ENCODE measurements at regions of chr19 and their contacts with region 1.

Region 1: DNA sequence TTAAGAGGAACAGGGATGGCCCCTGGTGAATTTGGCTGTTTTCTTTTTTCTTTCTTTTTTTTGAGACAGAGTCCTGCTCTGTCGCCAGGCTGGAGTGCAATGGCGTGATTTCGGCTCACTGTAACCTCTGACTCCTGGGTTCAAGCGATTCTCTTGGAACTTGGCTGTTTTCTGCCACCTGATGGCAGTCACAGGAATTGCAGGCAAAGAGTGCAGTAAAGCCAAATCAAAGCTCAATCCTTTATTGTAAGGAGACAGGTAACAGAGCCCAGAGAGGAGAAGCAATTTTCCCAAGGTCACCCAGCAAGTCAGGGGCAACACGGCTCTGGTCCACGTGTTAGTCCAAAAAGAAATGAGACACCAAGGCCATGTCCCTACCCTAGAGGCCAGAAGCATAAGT is 6.2 kb downstream of the TINCR start:
- DNase-seq: no peak
- H3K4me3 ChIP-seq: no peak overlapping the region
- H3K27ac ChIP-seq: no peak overlapping the region
- H3K4me1 ChIP-seq: no peaks in the 10 kb centered on the region
- H3K27me3 ChIP-seq: no peaks in the 10 kb centered on the region
- CTCF ChIP-seq: no peak

Region 2: DNA sequence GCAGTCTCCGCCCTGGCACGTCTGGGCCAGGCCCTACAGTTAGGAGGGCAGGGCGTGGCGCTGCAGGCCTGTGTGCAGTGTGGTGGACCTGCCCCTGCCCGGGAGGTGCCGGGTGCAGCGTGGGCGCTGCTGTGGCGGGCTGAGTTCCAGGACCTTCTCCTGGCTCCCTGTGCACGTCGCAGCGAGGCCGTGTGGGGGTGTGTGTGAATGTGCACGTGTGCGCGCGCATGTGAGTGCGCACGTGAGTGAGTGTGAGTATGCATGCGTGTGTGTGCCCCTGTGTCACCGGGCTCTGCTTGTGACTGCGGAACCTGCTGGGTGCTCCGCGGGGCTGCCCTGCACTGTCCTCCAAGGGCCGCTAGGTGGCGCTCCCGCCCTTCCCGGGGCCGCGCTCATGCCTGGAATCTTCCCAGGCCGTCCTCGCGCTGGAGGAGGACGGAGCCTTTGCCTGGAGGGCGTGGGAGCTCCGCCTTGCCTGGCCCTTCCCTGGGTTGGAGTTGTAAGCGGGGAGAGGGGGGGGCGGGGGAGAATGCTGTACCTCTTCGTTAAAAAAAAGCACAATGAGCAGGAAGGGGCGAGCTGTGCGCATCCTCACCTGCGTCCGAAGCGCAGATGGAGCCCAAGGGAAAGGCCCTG is 513.4 kb before region 1 on chr19:
- intact Hi-C with region 1: loop called (anchors 10 kb)
- DNase-seq: peak; percentile 85
- H3K4me3 ChIP-seq: no peak overlapping the region
- H3K27ac ChIP-seq: peak overlapping the region; percentile 75
- H3K4me1 ChIP-seq: peaks cover 31% of the 10 kb centered on the region
- H3K27me3 ChIP-seq: no peaks in the 10 kb centered on the region
- CTCF ChIP-seq: peak; percentile 99